ENCODE measurements at regions of chr4 and their contacts with region 1.

Region 1: GRCh38 chr4:39697740-39698423 is at the start of gene UBE2K:
- DNase-seq: peak; percentile 82
- ATAC-seq: peak; percentile 98
- H3K4me3 ChIP-seq: peak within 1 kb of the TSS; percentile 90
- H3K27ac ChIP-seq: peak within 1 kb of the TSS; percentile 97
- H3K4me1 ChIP-seq: peaks cover 5% of the 10 kb centered on the region
- H3K27me3 ChIP-seq: no peaks in the 10 kb centered on the region
- CTCF ChIP-seq: no peak
- POLR2A ChIP-seq: peak; percentile 67; the same call in 1 of the 2 replicates
- RAD21 ChIP-seq: no peak
- total RNA-seq, gene UBE2K: 17.7 and 24.4 TPM in 2 replicates

Region 2: GRCh38 chr4:39527273-39528060 is 170.4 kb before region 1 on chr4 and contains the start of gene UGDH:
- CTCF ChIA-PET with region 1: no interaction called
- POLR2A ChIA-PET with region 1: interaction called, 5 read pairs
- dilution Hi-C with region 1: no loop called
- in situ Hi-C with region 1: no loop called
- intact Hi-C with region 1: loop called (anchors 5 kb)
- DNase-seq: peak; percentile 99
- ATAC-seq: peak; percentile 96
- H3K4me3 ChIP-seq: peak within 1 kb of the TSS; percentile 76
- H3K27ac ChIP-seq: peak within 1 kb of the TSS; percentile 93
- H3K4me1 ChIP-seq: peaks cover 7% of the 10 kb centered on the region
- H3K27me3 ChIP-seq: no peaks in the 10 kb centered on the region
- CTCF ChIP-seq: no peak
- POLR2A ChIP-seq: peak; percentile 99
- RAD21 ChIP-seq: peak; percentile 21
- total RNA-seq, gene UGDH: 257 and 600 TPM in 2 replicates

Region 3: DNA sequence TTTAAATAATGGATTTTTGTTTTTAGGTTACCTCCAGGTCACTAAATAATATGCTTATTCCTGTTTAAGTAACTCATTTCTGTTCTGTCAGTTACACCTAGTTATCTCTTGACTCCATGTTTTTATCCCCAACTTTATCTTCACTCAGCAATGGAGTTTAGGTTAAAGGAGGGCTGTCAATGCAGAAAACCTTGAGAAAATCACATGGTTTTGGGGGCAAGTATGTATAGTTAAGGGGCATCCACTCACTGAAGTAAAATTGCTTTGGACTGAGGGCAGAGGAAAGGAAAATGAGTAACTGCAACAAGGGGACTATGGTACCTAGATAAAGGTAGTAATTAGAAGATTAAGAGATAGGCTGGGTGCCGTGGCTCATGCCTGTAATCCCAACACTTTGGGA is 87.2 kb after region 1 on chr4:
- CTCF ChIA-PET with region 1: no interaction called
- POLR2A ChIA-PET with region 1: no interaction called
- dilution Hi-C with region 1: no loop called
- in situ Hi-C with region 1: no loop called
- intact Hi-C with region 1: no loop called
- DNase-seq: no peak
- ATAC-seq: no peak
- H3K4me3 ChIP-seq: no peak overlapping the region
- H3K27ac ChIP-seq: no peak overlapping the region
- H3K4me1 ChIP-seq: no peaks in the 10 kb centered on the region
- H3K27me3 ChIP-seq: no peaks in the 10 kb centered on the region
- CTCF ChIP-seq: no peak
- POLR2A ChIP-seq: no peak
- RAD21 ChIP-seq: no peak

Region 4: GRCh38 chr4:39801975-39802374 is 104.1 kb after region 1 on chr4:
- CTCF ChIA-PET with region 1: no interaction called
- POLR2A ChIA-PET with region 1: interaction called, 13 read pairs
- dilution Hi-C with region 1: no loop called
- in situ Hi-C with region 1: no loop called
- intact Hi-C with region 1: no loop called
- DNase-seq: no peak
- ATAC-seq: no peak
- H3K4me3 ChIP-seq: no peak overlapping the region
- H3K27ac ChIP-seq: no peak overlapping the region
- H3K4me1 ChIP-seq: no peaks in the 10 kb centered on the region
- H3K27me3 ChIP-seq: no peaks in the 10 kb centered on the region
- CTCF ChIP-seq: no peak
- POLR2A ChIP-seq: no peak
- RAD21 ChIP-seq: no peak

Region 5: DNA sequence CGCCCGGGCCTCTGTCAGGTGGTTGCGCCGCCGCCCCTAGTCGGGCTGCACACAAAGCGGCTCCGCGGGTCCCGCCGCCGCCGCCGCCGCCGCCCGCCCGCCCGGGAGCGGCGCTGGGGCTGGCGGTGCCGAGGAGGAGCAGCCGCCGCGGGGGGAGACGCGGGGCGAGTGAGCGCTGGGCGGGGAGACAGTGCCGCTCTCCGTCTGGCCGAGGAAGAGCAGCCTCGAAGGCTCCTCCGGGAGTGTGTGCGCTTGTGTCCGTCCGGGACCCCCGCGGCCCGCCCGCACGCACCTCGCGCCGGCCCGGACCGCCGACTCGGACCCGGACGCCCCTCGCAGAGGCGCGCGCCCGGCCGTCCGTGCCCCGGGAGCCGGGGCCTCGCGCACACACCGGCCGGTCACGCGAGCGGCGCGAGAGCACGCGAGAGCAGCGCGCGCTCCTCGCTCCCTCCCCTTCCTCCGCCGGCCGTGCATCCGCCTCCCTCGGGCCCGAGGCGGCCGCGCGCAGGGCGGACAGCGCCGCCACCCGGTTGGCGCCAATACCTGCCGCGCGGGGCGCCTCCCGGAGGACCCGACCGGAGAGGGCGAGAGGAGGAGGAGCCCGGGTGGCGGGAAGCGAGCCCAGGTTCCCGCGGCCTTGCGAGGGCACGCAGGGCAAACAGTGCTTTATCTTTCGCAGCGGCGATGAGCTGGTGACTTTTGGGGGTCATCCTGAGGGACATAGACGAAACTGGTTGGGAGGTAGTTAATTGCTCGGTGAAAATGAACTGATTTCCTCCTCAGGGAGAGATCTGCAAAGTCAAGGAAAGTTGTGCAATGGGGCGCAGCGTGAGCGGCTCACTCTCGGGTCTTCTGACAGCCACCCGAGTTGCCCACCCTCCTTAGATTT is 279.9 kb after region 1 on chr4 and contains the start of gene PDS5A:
- CTCF ChIA-PET with region 1: no interaction called
- POLR2A ChIA-PET with region 1: no interaction called
- dilution Hi-C with region 1: no loop called
- in situ Hi-C with region 1: no loop called
- intact Hi-C with region 1: loop called (anchors 1 kb)
- DNase-seq: peak; percentile 84
- ATAC-seq: peak; percentile 89
- H3K4me3 ChIP-seq: peak within 1 kb of the TSS; percentile 96
- H3K27ac ChIP-seq: peak within 1 kb of the TSS; percentile 91
- H3K4me1 ChIP-seq: peaks cover 2% of the 10 kb centered on the region
- H3K27me3 ChIP-seq: no peaks in the 10 kb centered on the region
- CTCF ChIP-seq: peak; percentile 99
- POLR2A ChIP-seq: peak; percentile 62
- RAD21 ChIP-seq: peak; percentile 71
- total RNA-seq, gene PDS5A: 33.5 and 53.0 TPM in 2 replicates

Region 6: GRCh38 chr4:40309250-40309774 is 611.4 kb after region 1 on chr4:
- CTCF ChIA-PET with region 1: no interaction called
- POLR2A ChIA-PET with region 1: no interaction called
- dilution Hi-C with region 1: no loop called
- in situ Hi-C with region 1: loop called (anchors 25 kb)
- intact Hi-C with region 1: no loop called
- DNase-seq: peak; percentile 77
- ATAC-seq: peak; percentile 99
- H3K4me3 ChIP-seq: no peak overlapping the region
- H3K27ac ChIP-seq: no peak overlapping the region
- H3K4me1 ChIP-seq: no peaks in the 10 kb centered on the region
- H3K27me3 ChIP-seq: peaks cover 10% of the 10 kb centered on the region
- CTCF ChIP-seq: peak; percentile 88
- POLR2A ChIP-seq: no peak
- RAD21 ChIP-seq: peak; percentile 83